Activated CD8-positive, alpha-beta T cell treated with anti-CD3 and anti-CD28 coated beads for 36 hours (primary cell): ENCODE measurements at regions of chr6 and their contacts with region 1.

Region 1: DNA sequence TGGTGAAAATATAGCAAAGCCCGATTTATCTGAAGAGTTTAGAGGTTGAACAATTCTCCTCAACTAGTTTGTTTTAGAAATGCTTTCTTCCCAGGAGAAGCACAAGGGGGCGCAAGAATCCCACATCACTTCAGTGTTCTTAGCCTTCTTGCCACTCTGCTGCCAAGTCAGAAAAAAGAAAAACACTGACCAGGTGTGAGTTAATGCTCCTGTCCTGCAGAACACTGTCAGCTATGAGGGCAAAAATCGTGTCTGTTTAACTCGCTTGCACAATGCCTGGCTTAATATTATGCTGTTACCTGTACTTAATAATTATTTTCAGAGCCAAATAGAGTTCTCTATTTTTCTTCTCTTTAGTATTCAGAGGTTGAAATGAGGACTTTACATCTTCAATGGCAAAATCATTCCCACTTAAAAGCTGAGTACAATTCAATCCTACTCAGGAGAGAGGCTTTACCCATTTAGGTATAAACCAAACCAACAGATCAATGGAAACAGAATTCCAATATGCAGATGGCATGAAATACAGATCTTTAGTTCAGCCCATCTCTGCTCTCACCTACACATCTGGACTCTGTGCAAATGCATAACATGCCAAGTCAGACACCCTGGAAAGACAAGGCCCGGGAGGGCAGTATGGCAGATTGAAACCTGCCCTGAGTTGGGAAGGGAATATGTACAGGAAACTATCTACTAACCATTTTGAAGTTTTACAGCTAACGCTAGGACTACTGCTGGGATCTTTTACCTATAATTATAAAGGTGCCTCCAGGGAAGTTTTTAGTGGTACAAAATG is 71.4 kb upstream of the TULP1 start:
- DNase-seq: peak; percentile 87
- ATAC-seq: peak; percentile 71
- H3K4me3 Mint-ChIP-seq: no peak overlapping the region
- H3K27ac Mint-ChIP-seq: no peak overlapping the region
- H3K4me1 Mint-ChIP-seq: peaks cover 53% of the 10 kb centered on the region
- H3K27me3 Mint-ChIP-seq: no peaks in the 10 kb centered on the region
- CTCF ChIP-seq: peak; percentile 91

Region 2: GRCh38 chr6:35522660-35523658 is 61.1 kb before region 1 on chr6:
- CTCF ChIA-PET with region 1: interaction called, 10 read pairs
- POLR2A ChIA-PET with region 1: no interaction called
- intact Hi-C with region 1: no loop called
- DNase-seq: peak; percentile 81
- ATAC-seq: peak; percentile 91
- H3K4me3 Mint-ChIP-seq: peak overlapping the region; percentile 63
- H3K27ac Mint-ChIP-seq: peak overlapping the region; percentile 63
- H3K4me1 Mint-ChIP-seq: peaks cover 9% of the 10 kb centered on the region
- H3K27me3 Mint-ChIP-seq: no peaks in the 10 kb centered on the region
- CTCF ChIP-seq: peak; percentile 100

Region 3: GRCh38 chr6:35611240-35611639 is 27.1 kb after region 1 on chr6:
- CTCF ChIA-PET with region 1: interaction called, 14 read pairs
- POLR2A ChIA-PET with region 1: no interaction called
- intact Hi-C with region 1: no loop called
- DNase-seq: peak; percentile 71
- ATAC-seq: peak; percentile 92
- H3K4me3 Mint-ChIP-seq: no peak overlapping the region
- H3K27ac Mint-ChIP-seq: peak overlapping the region; percentile 71
- H3K4me1 Mint-ChIP-seq: peaks cover 70% of the 10 kb centered on the region
- H3K27me3 Mint-ChIP-seq: no peaks in the 10 kb centered on the region
- CTCF ChIP-seq: no peak

Region 4: DNA sequence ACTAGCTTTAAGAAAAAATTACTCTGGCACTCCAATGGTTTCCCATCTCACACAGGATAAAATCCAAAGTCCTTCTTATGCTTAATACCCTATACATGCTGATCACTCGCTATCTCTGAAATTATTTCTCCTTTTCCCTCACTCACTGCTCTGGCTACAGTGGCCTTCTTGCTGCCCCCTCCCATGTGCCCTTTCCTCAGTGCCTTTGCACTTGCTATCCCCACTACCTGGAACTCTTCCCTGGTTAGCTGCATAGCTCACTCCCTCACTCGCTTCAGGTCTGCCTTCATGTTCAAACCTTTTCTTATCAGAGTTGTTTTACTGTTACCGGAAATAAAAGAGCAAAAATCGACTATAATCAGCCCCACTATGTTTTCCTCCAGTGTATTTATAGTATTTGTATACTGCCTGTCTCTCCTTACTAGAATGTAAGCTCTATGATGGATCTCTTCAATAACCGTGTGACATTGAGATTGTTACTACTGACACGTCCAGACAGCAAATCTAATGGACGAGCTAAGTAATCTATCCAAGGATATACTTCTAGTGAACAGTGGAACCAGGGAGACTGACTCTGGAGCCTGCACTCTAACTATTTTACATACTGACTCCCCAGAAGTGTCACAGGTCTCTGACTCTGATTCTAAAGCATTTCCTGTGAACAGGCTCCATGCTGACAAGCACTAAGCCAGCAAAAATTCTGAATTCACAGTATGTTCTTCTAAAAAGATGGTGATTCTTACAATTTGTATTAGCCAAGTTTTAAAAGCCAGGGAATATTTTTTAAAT is 79.5 kb after region 1 on chr6:
- CTCF ChIA-PET with region 1: interaction called, 11 read pairs
- POLR2A ChIA-PET with region 1: no interaction called
- intact Hi-C with region 1: no loop called
- DNase-seq: no peak
- ATAC-seq: peak; percentile 60
- H3K4me3 Mint-ChIP-seq: no peak overlapping the region
- H3K27ac Mint-ChIP-seq: no peak overlapping the region
- H3K4me1 Mint-ChIP-seq: peaks cover 16% of the 10 kb centered on the region
- H3K27me3 Mint-ChIP-seq: no peaks in the 10 kb centered on the region
- CTCF ChIP-seq: no peak

Region 5: DNA sequence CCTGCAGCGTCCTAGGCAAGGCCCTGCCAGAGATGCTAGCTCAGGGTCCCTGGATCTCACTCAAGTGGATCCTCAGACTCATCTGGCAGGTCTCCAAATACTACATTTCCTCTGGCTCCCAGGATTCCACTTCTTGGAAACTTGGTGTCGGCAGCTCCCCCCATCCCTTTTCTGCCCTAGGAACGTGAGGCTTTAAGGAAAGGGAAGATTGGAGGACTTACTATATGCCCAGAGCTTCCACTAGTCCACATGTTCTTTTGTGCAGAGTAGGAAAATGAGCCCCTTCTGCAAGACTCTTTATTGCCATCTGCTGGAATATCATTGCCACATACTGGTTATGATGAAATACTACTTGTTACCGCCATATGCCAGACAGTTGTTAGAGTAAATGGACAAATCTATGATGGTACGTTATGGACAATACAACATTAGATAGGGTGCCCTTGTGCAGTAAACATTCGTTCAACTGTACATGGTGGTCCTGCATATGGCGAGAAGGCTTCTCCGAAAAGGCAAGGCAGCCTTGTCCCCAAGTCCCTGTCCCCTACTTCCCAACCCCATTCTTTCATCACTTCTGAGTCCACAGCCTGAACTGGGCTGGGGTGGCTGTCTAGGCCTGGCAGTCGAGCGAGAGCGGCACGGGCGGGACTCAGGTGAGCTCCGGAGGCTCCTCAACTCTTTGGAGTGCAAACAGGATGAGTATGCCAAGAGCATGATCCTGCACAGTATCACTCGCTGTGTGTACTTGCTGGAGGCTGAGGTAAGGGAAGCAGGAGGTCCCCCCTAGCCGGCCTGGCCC is 153.5 kb after region 1 on chr6:
- CTCF ChIA-PET with region 1: interaction called, 272 read pairs
- POLR2A ChIA-PET with region 1: interaction called, 4 read pairs
- intact Hi-C with region 1: loop called (anchors 1 kb)
- DNase-seq: peak; percentile 13
- ATAC-seq: peak; percentile 75
- H3K4me3 Mint-ChIP-seq: peak overlapping the region; percentile 31
- H3K27ac Mint-ChIP-seq: peak overlapping the region; percentile 77
- H3K4me1 Mint-ChIP-seq: peaks cover 42% of the 10 kb centered on the region
- H3K27me3 Mint-ChIP-seq: no peaks in the 10 kb centered on the region
- CTCF ChIP-seq: peak; percentile 86

Region 6: GRCh38 chr6:35993150-35993549 is 409.1 kb after region 1 on chr6:
- CTCF ChIA-PET with region 1: no interaction called
- POLR2A ChIA-PET with region 1: no interaction called
- intact Hi-C with region 1: no loop called
- DNase-seq: no peak
- ATAC-seq: no peak
- H3K4me3 Mint-ChIP-seq: no peak overlapping the region
- H3K27ac Mint-ChIP-seq: no peak overlapping the region
- H3K4me1 Mint-ChIP-seq: no peaks in the 10 kb centered on the region
- H3K27me3 Mint-ChIP-seq: no peaks in the 10 kb centered on the region
- CTCF ChIP-seq: no peak